CD14-positive monocyte (primary cell): ENCODE measurements at regions of chr12 and their contacts with region 1.

Region 1: GRCh38 chr12:89862511-89863179 is 154.0 kb upstream of the ATP2B1 start:
- DNase-seq: peak; percentile 89 to 95 (median 91)
- H3K4me3 ChIP-seq: peak overlapping the region in 1 of 3 experiments; percentile 54
- H3K4me3 Mint-ChIP-seq: peak overlapping the region in 1 of 2 donors; percentile 68
- H3K27ac ChIP-seq: peak overlapping the region; percentile 74 to 98
- H3K27ac Mint-ChIP-seq: peak overlapping the region; percentile 97 to 100 (median 99)
- H3K4me1 ChIP-seq: peaks cover 69 to 73% of the 10 kb centered on the region in 2 donors
- H3K4me1 Mint-ChIP-seq: peaks cover 69% of the 10 kb centered on the region
- H3K27me3 ChIP-seq: no peaks in the 10 kb centered on the region
- H3K27me3 Mint-ChIP-seq: peaks cover 0 to 2% (median 0%) of the 10 kb centered on the region in 3 donors
- CTCF ChIP-seq: no peak

Region 2: GRCh38 chr12:89733579-89734201 is 129.0 kb before region 1 on chr12:
- intact Hi-C with region 1: loop called in 1 of 2 experiments (anchors 10 kb)
- DNase-seq: peak; percentile 83 to 94 (median 94)
- H3K4me3 ChIP-seq: peak overlapping the region in 1 of 3 experiments; percentile 36
- H3K4me3 Mint-ChIP-seq: no peak overlapping the region
- H3K27ac ChIP-seq: peak overlapping the region in 1 of 2 donors; percentile 36
- H3K27ac Mint-ChIP-seq: peak overlapping the region; percentile 78 to 89 (median 83)
- H3K4me1 ChIP-seq: peaks cover 31 to 38% of the 10 kb centered on the region in 2 donors
- H3K4me1 Mint-ChIP-seq: peaks cover 38% of the 10 kb centered on the region
- H3K27me3 ChIP-seq: no peaks in the 10 kb centered on the region
- H3K27me3 Mint-ChIP-seq: peaks cover 0 to 2% (median 0%) of the 10 kb centered on the region in 3 donors
- CTCF ChIP-seq: no peak

Region 3: GRCh38 chr12:89765959-89766824 is 96.5 kb before region 1 on chr12:
- intact Hi-C with region 1: no loop called
- DNase-seq: no peak
- H3K4me3 ChIP-seq: no peak overlapping the region
- H3K4me3 Mint-ChIP-seq: no peak overlapping the region
- H3K27ac ChIP-seq: no peak overlapping the region
- H3K27ac Mint-ChIP-seq: peak overlapping the region in 2 of 7 donors; percentile 12 to 63
- H3K4me1 ChIP-seq: peaks cover 20 to 23% of the 10 kb centered on the region in 2 donors
- H3K4me1 Mint-ChIP-seq: peaks cover 25% of the 10 kb centered on the region
- H3K27me3 ChIP-seq: no peaks in the 10 kb centered on the region
- H3K27me3 Mint-ChIP-seq: no peaks in the 10 kb centered on the region
- CTCF ChIP-seq: no peak

Region 4: GRCh38 chr12:89789862-89790261 is 72.8 kb before region 1 on chr12:
- intact Hi-C with region 1: loop called (anchors 2 to 10 kb)
- DNase-seq: peak; percentile 92 to 97 (median 97)
- H3K4me3 ChIP-seq: peak overlapping the region in 1 of 3 experiments; percentile 46
- H3K4me3 Mint-ChIP-seq: peak overlapping the region in 1 of 2 donors; percentile 54
- H3K27ac ChIP-seq: peak overlapping the region; percentile 81 to 84
- H3K27ac Mint-ChIP-seq: peak overlapping the region; percentile 88 to 96 (median 94)
- H3K4me1 ChIP-seq: peaks cover 32 to 38% of the 10 kb centered on the region in 2 donors
- H3K4me1 Mint-ChIP-seq: peaks cover 35% of the 10 kb centered on the region
- H3K27me3 ChIP-seq: no peaks in the 10 kb centered on the region
- H3K27me3 Mint-ChIP-seq: no peaks in the 10 kb centered on the region
- CTCF ChIP-seq: no peak

Region 5: DNA sequence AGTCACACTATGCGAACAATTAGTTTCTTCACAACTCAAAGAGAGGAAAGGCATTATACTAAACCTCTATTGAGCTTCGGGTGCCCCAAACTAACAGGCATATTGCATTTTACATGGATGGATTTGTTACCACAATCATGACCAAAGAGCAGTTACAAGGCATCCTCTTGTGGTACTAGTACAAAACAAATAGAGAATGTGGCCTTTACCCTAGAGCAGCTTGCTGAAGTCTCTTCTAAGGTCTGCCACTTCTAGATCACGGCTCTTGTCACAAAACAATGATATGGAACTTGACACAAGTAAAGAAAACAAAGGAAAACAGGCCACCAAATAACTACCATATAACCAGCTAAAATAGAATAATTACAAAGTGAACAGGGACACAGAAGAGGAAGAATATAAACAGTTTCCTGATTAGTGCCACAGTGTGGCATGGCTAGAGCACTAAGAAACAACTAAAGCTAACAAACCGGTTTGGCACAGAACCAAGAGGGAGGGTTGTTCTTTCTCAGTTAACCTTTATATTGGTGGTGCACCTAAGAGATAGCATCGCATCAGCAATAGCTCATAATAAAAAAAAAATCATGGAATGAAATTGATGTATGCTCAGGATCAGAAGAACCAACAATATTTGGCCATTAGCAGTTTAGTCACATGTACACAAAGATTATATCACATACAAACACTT is 55.7 kb after region 1 on chr12:
- intact Hi-C with region 1: loop called (anchors 10 kb)
- DNase-seq: no peak
- H3K4me3 ChIP-seq: no peak overlapping the region
- H3K4me3 Mint-ChIP-seq: no peak overlapping the region
- H3K27ac ChIP-seq: no peak overlapping the region
- H3K27ac Mint-ChIP-seq: peak overlapping the region in 1 of 7 donors; percentile 82
- H3K4me1 ChIP-seq: peaks cover 5 to 9% of the 10 kb centered on the region in 2 donors
- H3K4me1 Mint-ChIP-seq: peaks cover 6% of the 10 kb centered on the region
- H3K27me3 ChIP-seq: no peaks in the 10 kb centered on the region
- H3K27me3 Mint-ChIP-seq: no peaks in the 10 kb centered on the region
- CTCF ChIP-seq: no peak